SK-N-SH (cell line): ENCODE measurements at regions of chr3 and their contacts with region 1.

Region 1: GRCh38 chr3:167882067-167882667 is 146.6 kb downstream of the SERPINI1 start:
- DNase-seq: peak; percentile 21
- H3K4me3 ChIP-seq: no peak overlapping the region; a peak in 1 of 4 replicates
- H3K27ac ChIP-seq: no peak overlapping the region
- H3K4me1 ChIP-seq: no peaks in the 10 kb centered on the region; a peak in 1 of 4 replicates
- H3K27me3 ChIP-seq: no peaks in the 10 kb centered on the region
- CTCF ChIP-seq: peak; percentile 76
- EP300 ChIP-seq: no peak
- RAD21 ChIP-seq: peak; percentile 75

Region 2: DNA sequence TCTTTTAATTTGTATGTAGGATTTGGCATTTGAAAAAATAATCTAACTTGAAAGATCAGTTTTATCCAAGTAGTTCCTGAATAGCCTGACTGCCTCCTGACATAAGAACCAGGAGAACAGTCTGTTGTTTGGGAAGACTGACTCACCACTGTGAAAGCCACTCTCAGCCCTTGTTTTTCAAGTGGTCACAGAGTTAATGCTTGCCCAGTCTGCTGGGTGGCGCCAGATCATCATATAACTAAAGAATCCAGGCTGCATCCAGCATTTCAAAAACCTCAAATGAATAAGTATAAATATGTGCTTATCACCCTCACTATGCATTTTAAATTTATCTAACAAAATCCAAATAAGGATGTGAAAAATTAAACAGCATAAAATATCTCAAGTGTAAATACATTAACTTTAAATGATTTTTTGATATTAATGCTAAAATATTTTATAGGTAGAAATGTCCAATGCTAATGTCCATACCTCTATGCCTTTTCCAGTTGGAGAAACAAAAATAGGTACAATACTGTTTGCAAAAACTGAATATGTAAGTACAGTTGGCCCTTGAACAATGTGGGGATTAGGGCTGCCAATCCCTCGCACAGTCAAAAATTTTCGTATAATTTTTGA is 475.2 kb before region 1 on chr3:
- CTCF ChIA-PET with region 1: interaction called, 12 read pairs
- POLR2A ChIA-PET with region 1: no interaction called
- DNase-seq: peak; percentile 8
- H3K4me3 ChIP-seq: no peak overlapping the region; a peak in 1 of 4 replicates
- H3K27ac ChIP-seq: no peak overlapping the region
- H3K4me1 ChIP-seq: no peaks in the 10 kb centered on the region
- H3K27me3 ChIP-seq: no peaks in the 10 kb centered on the region
- CTCF ChIP-seq: peak; percentile 75
- EP300 ChIP-seq: no peak
- RAD21 ChIP-seq: peak; percentile 77

Region 3: DNA sequence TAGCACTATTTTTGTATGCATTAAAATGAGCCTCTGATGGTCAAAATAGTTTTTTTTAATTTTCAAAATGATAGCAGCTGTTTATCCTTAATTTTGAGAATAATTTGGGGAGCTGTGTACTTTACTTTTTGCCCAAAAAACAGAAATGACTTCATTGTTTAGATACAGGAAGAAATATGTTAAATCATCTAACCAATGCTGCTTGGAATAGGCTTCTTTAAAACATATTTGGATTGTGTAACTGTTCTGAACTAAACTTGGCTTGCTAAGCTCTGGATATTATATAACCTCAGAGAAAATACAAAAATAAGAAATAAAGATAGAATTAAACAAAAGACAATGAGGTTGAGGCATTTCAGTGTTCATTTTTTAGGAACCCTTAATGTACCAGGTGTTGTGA is 27.3 kb before region 1 on chr3:
- CTCF ChIA-PET with region 1: interaction called, 11 read pairs
- POLR2A ChIA-PET with region 1: no interaction called
- DNase-seq: no peak
- H3K4me3 ChIP-seq: no peak overlapping the region
- H3K27ac ChIP-seq: no peak overlapping the region
- H3K4me1 ChIP-seq: no peaks in the 10 kb centered on the region
- H3K27me3 ChIP-seq: no peaks in the 10 kb centered on the region
- CTCF ChIP-seq: no peak
- EP300 ChIP-seq: no peak
- RAD21 ChIP-seq: no peak

Region 4: DNA sequence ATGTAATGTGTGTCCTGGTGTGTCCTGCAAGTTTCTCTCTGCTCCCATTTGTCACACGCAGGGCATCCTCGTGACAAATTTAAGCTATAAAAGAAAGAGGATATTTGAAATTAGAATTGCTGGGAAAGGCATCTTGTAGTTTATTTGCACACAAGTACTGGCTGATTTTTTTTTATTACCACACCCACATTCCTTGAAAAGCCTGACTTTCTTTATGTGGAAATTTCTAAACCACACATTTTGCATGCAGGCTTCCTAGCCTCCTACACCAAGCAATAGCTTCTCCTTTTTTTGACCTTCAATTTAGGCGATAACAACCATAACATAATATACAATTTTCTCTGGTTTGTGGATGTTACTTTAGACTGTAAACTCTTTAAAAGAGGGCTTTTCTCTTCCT is 20.5 kb before region 1 on chr3:
- CTCF ChIA-PET with region 1: interaction called, 12 read pairs
- POLR2A ChIA-PET with region 1: no interaction called
- DNase-seq: no peak
- H3K4me3 ChIP-seq: no peak overlapping the region
- H3K27ac ChIP-seq: no peak overlapping the region
- H3K4me1 ChIP-seq: no peaks in the 10 kb centered on the region
- H3K27me3 ChIP-seq: no peaks in the 10 kb centered on the region
- CTCF ChIP-seq: no peak
- EP300 ChIP-seq: no peak
- RAD21 ChIP-seq: no peak

Region 5: DNA sequence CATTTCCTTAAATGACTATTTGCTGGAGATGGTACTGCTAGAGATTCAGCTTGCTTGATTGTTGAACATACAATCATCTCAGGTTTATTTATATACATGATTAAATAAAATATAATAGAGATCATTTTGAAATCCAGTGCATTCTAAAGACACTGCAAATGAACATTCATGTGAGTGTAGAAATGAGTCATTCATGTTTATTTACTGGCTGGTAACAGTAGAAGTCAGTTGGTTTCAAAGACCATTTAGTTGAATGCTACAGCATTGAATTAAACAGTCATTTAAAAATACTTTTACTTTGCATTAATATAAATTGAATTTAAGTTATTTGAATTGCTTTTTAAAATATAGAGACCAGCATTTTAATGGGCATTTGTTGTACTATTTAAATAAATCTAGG is 765.4 kb after region 1 on chr3:
- CTCF ChIA-PET with region 1: no interaction called
- POLR2A ChIA-PET with region 1: no interaction called
- DNase-seq: no peak
- H3K4me3 ChIP-seq: no peak overlapping the region
- H3K27ac ChIP-seq: no peak overlapping the region
- H3K4me1 ChIP-seq: no peaks in the 10 kb centered on the region; a peak in 1 of 4 replicates
- H3K27me3 ChIP-seq: no peaks in the 10 kb centered on the region
- CTCF ChIP-seq: no peak
- EP300 ChIP-seq: no peak
- RAD21 ChIP-seq: no peak